MCF 10A (cell line): ENCODE measurements at regions of chr1 and their contacts with region 1.

Region 1: DNA sequence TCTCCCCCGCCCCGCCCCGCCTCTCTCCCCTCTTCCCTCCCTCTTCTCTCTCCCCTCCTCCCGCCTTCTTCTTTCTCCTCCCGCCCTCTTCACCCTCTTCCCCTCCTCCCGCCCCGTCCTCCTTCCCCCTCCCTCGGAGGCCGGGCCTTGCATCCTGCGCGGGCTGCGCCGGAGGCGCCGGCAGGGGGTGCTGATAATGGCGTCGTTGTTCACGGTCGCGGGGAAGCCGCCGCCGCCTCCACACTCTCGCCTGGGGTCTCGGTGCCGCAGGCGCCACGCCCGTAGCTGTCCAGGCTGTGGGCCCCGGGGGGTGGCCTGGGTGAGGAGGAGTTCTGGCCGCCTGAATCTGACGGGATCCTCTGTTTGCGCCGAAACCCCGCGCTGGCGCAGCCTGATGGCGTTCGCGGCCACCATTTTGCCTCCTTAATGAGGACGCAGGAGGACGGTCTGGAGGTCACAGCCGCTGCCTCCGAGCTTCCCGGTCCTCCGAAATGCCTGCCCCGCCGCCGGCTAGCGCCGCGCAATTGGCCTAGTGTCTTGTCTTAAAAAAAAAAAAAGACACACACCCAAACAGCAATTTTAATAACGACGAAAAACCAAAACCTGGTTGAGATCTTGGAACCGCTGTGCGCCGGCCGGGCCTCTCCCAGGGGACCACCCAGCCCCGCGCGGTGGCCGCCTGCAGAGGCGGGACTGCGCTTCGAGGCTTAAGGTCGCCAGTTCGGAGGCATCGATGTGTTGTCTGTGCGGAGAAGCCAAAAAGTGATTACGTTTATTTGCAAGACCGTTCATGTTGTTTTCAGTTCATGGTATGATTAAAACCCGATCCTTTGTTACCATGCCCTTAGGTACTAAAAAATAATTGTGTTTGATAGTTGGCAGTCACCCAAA is 106.6 kb upstream of the HNRNPU start:
- DNase-seq: peak; percentile 100
- H3K4me3 Mint-ChIP-seq: peak overlapping the region; percentile 98
- H3K27ac Mint-ChIP-seq: peak overlapping the region; percentile 100
- H3K4me1 Mint-ChIP-seq: peaks cover 29% of the 10 kb centered on the region
- H3K27me3 Mint-ChIP-seq: no peaks in the 10 kb centered on the region
- CTCF ChIP-seq: peak; percentile 85

Region 2: DNA sequence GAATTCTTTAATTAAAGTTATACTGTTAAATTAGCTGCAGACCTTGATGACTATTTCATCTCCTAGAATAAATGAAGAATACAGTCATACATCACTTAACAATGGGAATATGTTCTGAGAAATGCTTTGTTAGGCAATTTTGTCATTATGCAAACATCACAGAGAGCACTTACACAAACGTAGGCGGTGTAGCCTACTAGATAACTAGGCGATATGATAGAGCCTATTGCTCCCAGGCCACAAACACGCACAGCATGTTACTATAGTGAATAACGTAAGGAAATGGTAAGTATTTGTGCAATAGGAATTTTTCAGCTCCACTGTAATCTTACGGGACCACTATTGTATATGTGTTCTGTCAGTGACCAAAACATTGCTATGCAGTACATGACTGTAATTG is 355.6 kb before region 1 on chr1:
- CTCF ChIA-PET with region 1: no interaction called
- POLR2A ChIA-PET with region 1: no interaction called
- intact Hi-C with region 1: no loop called
- DNase-seq: no peak
- H3K4me3 Mint-ChIP-seq: no peak overlapping the region
- H3K27ac Mint-ChIP-seq: no peak overlapping the region
- H3K4me1 Mint-ChIP-seq: no peaks in the 10 kb centered on the region
- H3K27me3 Mint-ChIP-seq: no peaks in the 10 kb centered on the region
- CTCF ChIP-seq: no peak

Region 3: DNA sequence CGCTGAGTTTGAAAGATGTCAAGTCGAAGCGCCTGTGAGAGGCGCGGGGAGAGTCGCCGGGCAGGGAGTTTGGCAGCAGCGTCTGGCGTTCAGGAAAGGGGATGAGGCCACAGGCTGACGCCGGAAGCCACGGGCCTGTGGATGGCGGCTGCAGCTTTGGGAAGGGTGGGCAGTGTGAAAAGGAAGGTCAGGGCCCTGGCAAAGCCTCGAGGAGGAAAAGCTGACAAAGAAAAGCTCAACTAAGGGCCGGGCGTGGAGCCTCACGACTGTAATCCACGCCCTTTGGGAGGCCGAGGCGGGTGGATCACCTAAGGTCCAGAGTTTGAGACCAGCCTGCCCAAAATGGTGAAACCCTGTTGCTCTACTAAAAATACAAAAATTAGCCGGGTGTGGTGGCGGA is 160.7 kb before region 1 on chr1:
- CTCF ChIA-PET with region 1: no interaction called
- POLR2A ChIA-PET with region 1: no interaction called
- intact Hi-C with region 1: no loop called
- DNase-seq: no peak
- H3K4me3 Mint-ChIP-seq: no peak overlapping the region
- H3K27ac Mint-ChIP-seq: no peak overlapping the region
- H3K4me1 Mint-ChIP-seq: no peaks in the 10 kb centered on the region
- H3K27me3 Mint-ChIP-seq: no peaks in the 10 kb centered on the region
- CTCF ChIP-seq: no peak

Region 4: GRCh38 chr1:244826712-244827111 is 144.2 kb before region 1 on chr1:
- CTCF ChIA-PET with region 1: interaction called, 5 read pairs
- POLR2A ChIA-PET with region 1: interaction called, 10 read pairs
- intact Hi-C with region 1: no loop called
- DNase-seq: no peak
- H3K4me3 Mint-ChIP-seq: no peak overlapping the region
- H3K27ac Mint-ChIP-seq: no peak overlapping the region
- H3K4me1 Mint-ChIP-seq: peaks cover 6% of the 10 kb centered on the region
- H3K27me3 Mint-ChIP-seq: no peaks in the 10 kb centered on the region
- CTCF ChIP-seq: no peak

Region 5: GRCh38 chr1:244835276-244836134 is 135.4 kb before region 1 on chr1 and contains the start of gene COX20:
- CTCF ChIA-PET with region 1: interaction called, 5 read pairs
- POLR2A ChIA-PET with region 1: interaction called, 290 read pairs
- intact Hi-C with region 1: loop called (anchors 1 kb)
- DNase-seq: peak; percentile 98
- H3K4me3 Mint-ChIP-seq: peak within 1 kb of the TSS; percentile 81
- H3K27ac Mint-ChIP-seq: peak within 1 kb of the TSS; percentile 99
- H3K4me1 Mint-ChIP-seq: peaks cover 33% of the 10 kb centered on the region
- H3K27me3 Mint-ChIP-seq: no peaks in the 10 kb centered on the region
- CTCF ChIP-seq: no peak
- total RNA-seq, gene COX20: 44.6 and 46.1 TPM in 2 replicates

Region 6: DNA sequence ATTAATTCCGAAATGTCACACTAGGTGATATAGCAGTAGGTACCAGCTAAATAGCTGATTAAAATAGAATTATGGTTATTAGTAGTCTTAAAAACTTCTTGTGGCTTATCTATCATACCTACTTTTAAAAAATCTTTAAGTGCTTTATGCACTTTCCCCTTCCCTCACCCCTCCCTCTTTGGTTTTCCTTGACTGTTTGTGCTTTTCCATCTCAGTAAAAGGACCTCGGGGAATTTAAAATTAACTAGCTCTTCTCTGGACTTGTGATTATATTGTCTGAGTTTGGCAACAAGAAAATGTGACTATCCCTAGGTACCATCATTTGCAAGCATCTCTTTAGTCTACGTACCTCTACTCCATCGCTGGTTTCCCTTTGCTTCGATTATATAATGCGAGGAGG is 124.3 kb before region 1 on chr1:
- CTCF ChIA-PET with region 1: interaction called, 3 read pairs
- POLR2A ChIA-PET with region 1: interaction called, 719 read pairs
- intact Hi-C with region 1: no loop called
- DNase-seq: no peak
- H3K4me3 Mint-ChIP-seq: no peak overlapping the region
- H3K27ac Mint-ChIP-seq: no peak overlapping the region
- H3K4me1 Mint-ChIP-seq: no peaks in the 10 kb centered on the region
- H3K27me3 Mint-ChIP-seq: no peaks in the 10 kb centered on the region
- CTCF ChIP-seq: no peak

Region 7: DNA sequence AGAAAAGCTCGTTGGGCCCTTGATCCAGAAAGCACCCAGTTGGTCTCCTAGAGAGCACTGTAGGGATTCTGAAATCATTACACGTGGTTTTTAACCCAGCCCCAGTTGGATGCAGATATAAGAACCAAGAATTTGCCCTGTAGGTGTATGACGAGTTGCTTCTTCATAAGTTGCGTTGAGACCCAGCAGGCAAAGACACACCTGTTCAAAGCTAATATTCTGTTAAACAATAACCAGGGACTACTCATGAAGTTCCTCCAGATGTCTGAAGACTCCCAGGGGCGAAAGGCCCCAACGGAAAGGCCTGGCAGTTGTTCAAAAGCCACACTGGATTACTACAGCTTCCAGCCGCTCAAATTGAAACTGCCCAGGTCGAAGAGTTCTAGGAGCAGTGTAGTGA is 18.0 kb before region 1 on chr1:
- CTCF ChIA-PET with region 1: interaction called, 3 read pairs
- POLR2A ChIA-PET with region 1: interaction called, 50 read pairs
- intact Hi-C with region 1: no loop called
- DNase-seq: peak; percentile 62
- H3K4me3 Mint-ChIP-seq: no peak overlapping the region
- H3K27ac Mint-ChIP-seq: no peak overlapping the region
- H3K4me1 Mint-ChIP-seq: no peaks in the 10 kb centered on the region
- H3K27me3 Mint-ChIP-seq: no peaks in the 10 kb centered on the region
- CTCF ChIP-seq: no peak

Region 8: GRCh38 chr1:244989813-244990212 is 18.9 kb after region 1 on chr1:
- CTCF ChIA-PET with region 1: interaction called, 22 read pairs
- POLR2A ChIA-PET with region 1: interaction called, 24 read pairs
- intact Hi-C with region 1: loop called (anchors 1 kb)
- DNase-seq: peak; percentile 77
- H3K4me3 Mint-ChIP-seq: no peak overlapping the region
- H3K27ac Mint-ChIP-seq: peak overlapping the region; percentile 17
- H3K4me1 Mint-ChIP-seq: peaks cover 24% of the 10 kb centered on the region
- H3K27me3 Mint-ChIP-seq: no peaks in the 10 kb centered on the region
- CTCF ChIP-seq: no peak

Region 9: DNA sequence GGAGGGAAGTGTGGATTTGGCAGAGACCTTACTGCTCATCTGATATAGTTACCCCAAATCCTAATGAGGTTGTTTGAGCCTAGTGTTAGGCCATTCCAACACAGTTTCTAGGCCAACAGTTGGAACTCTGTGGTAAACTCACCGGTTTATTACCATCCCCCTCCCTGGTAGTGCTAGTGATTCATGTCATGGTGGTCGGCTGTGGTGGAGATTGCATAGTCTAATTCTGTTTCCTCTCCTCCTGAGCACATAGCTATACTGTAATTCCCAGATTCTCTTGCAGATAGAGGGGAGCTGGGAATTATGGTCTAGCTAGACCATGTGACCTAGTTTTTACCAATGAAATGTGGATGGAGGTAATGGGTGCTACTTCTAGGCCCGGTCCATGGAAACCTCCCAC is 60.1 kb after region 1 on chr1:
- CTCF ChIA-PET with region 1: interaction called, 4 read pairs
- POLR2A ChIA-PET with region 1: interaction called, 10 read pairs
- intact Hi-C with region 1: no loop called
- DNase-seq: no peak
- H3K4me3 Mint-ChIP-seq: no peak overlapping the region
- H3K27ac Mint-ChIP-seq: no peak overlapping the region
- H3K4me1 Mint-ChIP-seq: peaks cover 6% of the 10 kb centered on the region
- H3K27me3 Mint-ChIP-seq: no peaks in the 10 kb centered on the region
- CTCF ChIP-seq: no peak